Calu3 (cell line): ENCODE measurements at regions of chr1 and their contacts with region 1.

Region 1: DNA sequence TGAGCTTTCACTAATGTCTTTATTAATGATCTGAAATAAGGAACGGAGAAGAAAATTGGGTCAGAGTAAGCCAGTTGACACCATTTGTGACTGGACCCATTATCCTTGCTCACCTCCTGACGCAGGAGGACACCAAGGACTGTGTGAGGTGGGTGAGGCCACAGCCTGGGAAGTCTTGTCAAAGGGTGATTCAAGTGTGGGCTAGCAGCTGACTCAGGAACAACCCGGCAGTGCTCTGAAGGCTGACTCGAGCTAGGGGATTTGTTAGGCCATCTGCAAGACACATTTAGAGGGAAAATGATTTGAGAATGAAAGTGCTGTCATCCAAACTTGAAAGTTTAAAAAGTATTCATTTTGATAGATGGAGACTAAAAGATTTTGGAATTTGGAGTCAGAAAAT is 21.2 kb downstream of the PRRX1 start:
- DNase-seq: no peak
- H3K4me3 Mint-ChIP-seq: no peak overlapping the region
- H3K27ac Mint-ChIP-seq: no peak overlapping the region
- H3K4me1 Mint-ChIP-seq: peaks cover 10% of the 10 kb centered on the region
- H3K27me3 Mint-ChIP-seq: no peaks in the 10 kb centered on the region
- CTCF ChIP-seq: no peak

Region 2: GRCh38 chr1:169928438-169929209 is 756.5 kb before region 1 on chr1:
- CTCF ChIA-PET with region 1: no interaction called
- intact Hi-C with region 1: loop called (anchors 10 kb)
- DNase-seq: no peak
- H3K4me3 Mint-ChIP-seq: no peak overlapping the region
- H3K27ac Mint-ChIP-seq: no peak overlapping the region
- H3K4me1 Mint-ChIP-seq: peaks cover 15% of the 10 kb centered on the region
- H3K27me3 Mint-ChIP-seq: no peaks in the 10 kb centered on the region
- CTCF ChIP-seq: peak; percentile 53

Region 3: GRCh38 chr1:170010443-170010842 is 674.7 kb before region 1 on chr1:
- CTCF ChIA-PET with region 1: interaction called, 4 read pairs
- intact Hi-C with region 1: loop called (anchors 5 kb)
- DNase-seq: peak; percentile 65
- H3K4me3 Mint-ChIP-seq: no peak overlapping the region
- H3K27ac Mint-ChIP-seq: no peak overlapping the region
- H3K4me1 Mint-ChIP-seq: no peaks in the 10 kb centered on the region
- H3K27me3 Mint-ChIP-seq: no peaks in the 10 kb centered on the region
- CTCF ChIP-seq: peak; percentile 46

Region 4: GRCh38 chr1:170494369-170494768 is 190.8 kb before region 1 on chr1:
- CTCF ChIA-PET with region 1: no interaction called
- intact Hi-C with region 1: no loop called
- DNase-seq: peak; percentile 56
- H3K4me3 Mint-ChIP-seq: peak overlapping the region; percentile 56
- H3K27ac Mint-ChIP-seq: peak overlapping the region; percentile 85
- H3K4me1 Mint-ChIP-seq: peaks cover 22% of the 10 kb centered on the region
- H3K27me3 Mint-ChIP-seq: no peaks in the 10 kb centered on the region
- CTCF ChIP-seq: no peak